ENCODE measurements at regions of chr7 and their contacts with region 1.

Region 1: GRCh38 chr7:111763221-111763801 is 201.0 kb upstream of the IMMP2L start:
- DNase-seq: peak; percentile 75
- H3K4me3 ChIP-seq: no peak overlapping the region
- H3K27ac ChIP-seq: peak overlapping the region in 1 of 2 experiments; percentile 36; a peak in 1 of 4 replicates
- H3K4me1 ChIP-seq: peaks cover 0 to 3% of the 10 kb centered on the region in 2 experiments; a peak in 1 of 4 replicates
- H3K27me3 ChIP-seq: no peaks in the 10 kb centered on the region
- CTCF ChIP-seq: peak; percentile 99
- EP300 ChIP-seq: no peak
- RAD21 ChIP-seq: peak; percentile 82

Region 2: GRCh38 chr7:111682588-111683340 is 80.5 kb before region 1 on chr7:
- CTCF ChIA-PET with region 1: no interaction called
- POLR2A ChIA-PET with region 1: no interaction called
- DNase-seq: peak; percentile 13
- H3K4me3 ChIP-seq: 0 out of 4 replicates have a peak overlapping the region, but pooled peaks of 1 of the 2 experiments have one; percentile 7
- H3K27ac ChIP-seq: peak overlapping the region in 1 of 2 experiments; percentile 46; a peak in 2 of 4 replicates
- H3K4me1 ChIP-seq: peaks cover 8 to 19% of the 10 kb centered on the region in 2 experiments
- H3K27me3 ChIP-seq: no peaks in the 10 kb centered on the region
- CTCF ChIP-seq: no peak
- EP300 ChIP-seq: peak in 1 of 2 experiments; percentile 79; a peak in 2 of 4 replicates
- RAD21 ChIP-seq: no peak

Region 3: GRCh38 chr7:111741811-111742240 is 21.5 kb before region 1 on chr7:
- CTCF ChIA-PET with region 1: interaction called, 86 read pairs
- POLR2A ChIA-PET with region 1: no interaction called
- DNase-seq: peak; percentile 79
- H3K4me3 ChIP-seq: no peak overlapping the region; a peak in 1 of 4 replicates
- H3K27ac ChIP-seq: no peak overlapping the region
- H3K4me1 ChIP-seq: peaks cover 0 to 4% of the 10 kb centered on the region in 2 experiments; a peak in 2 of 4 replicates
- H3K27me3 ChIP-seq: no peaks in the 10 kb centered on the region
- CTCF ChIP-seq: peak; percentile 92
- EP300 ChIP-seq: no peak
- RAD21 ChIP-seq: peak; percentile 96

Region 4: GRCh38 chr7:111788286-111789047 is 25.2 kb after region 1 on chr7:
- CTCF ChIA-PET with region 1: interaction called, 20 read pairs
- POLR2A ChIA-PET with region 1: no interaction called
- DNase-seq: no peak
- H3K4me3 ChIP-seq: no peak overlapping the region
- H3K27ac ChIP-seq: peak overlapping the region in 1 of 2 experiments; percentile 45; a peak in 1 of 4 replicates
- H3K4me1 ChIP-seq: peaks cover 7 to 16% of the 10 kb centered on the region in 2 experiments; a peak in 2 of 4 replicates
- H3K27me3 ChIP-seq: no peaks in the 10 kb centered on the region
- CTCF ChIP-seq: no peak
- EP300 ChIP-seq: no peak
- RAD21 ChIP-seq: no peak

Region 5: GRCh38 chr7:111842491-111842890 is 79.2 kb after region 1 on chr7:
- CTCF ChIA-PET with region 1: interaction called, 29 read pairs
- POLR2A ChIA-PET with region 1: no interaction called
- DNase-seq: no peak
- H3K4me3 ChIP-seq: no peak overlapping the region
- H3K27ac ChIP-seq: no peak overlapping the region
- H3K4me1 ChIP-seq: peaks cover 0 to 13% of the 10 kb centered on the region in 2 experiments; a peak in 2 of 4 replicates
- H3K27me3 ChIP-seq: no peaks in the 10 kb centered on the region
- CTCF ChIP-seq: no peak
- EP300 ChIP-seq: no peak
- RAD21 ChIP-seq: no peak

Region 6: GRCh38 chr7:111872450-111873325 is 109.4 kb after region 1 on chr7:
- CTCF ChIA-PET with region 1: interaction called, 11 read pairs
- POLR2A ChIA-PET with region 1: no interaction called
- DNase-seq: no peak
- H3K4me3 ChIP-seq: no peak overlapping the region
- H3K27ac ChIP-seq: no peak overlapping the region
- H3K4me1 ChIP-seq: peaks cover 0 to 24% of the 10 kb centered on the region in 2 experiments; a peak in 2 of 4 replicates
- H3K27me3 ChIP-seq: no peaks in the 10 kb centered on the region
- CTCF ChIP-seq: no peak
- EP300 ChIP-seq: no peak
- RAD21 ChIP-seq: no peak

Region 7: GRCh38 chr7:111903797-111904196 is 140.5 kb after region 1 on chr7:
- CTCF ChIA-PET with region 1: no interaction called
- POLR2A ChIA-PET with region 1: no interaction called
- DNase-seq: no peak
- H3K4me3 ChIP-seq: no peak overlapping the region
- H3K27ac ChIP-seq: no peak overlapping the region
- H3K4me1 ChIP-seq: no peaks in the 10 kb centered on the region
- H3K27me3 ChIP-seq: no peaks in the 10 kb centered on the region
- CTCF ChIP-seq: no peak
- EP300 ChIP-seq: no peak
- RAD21 ChIP-seq: no peak

Region 8: DNA sequence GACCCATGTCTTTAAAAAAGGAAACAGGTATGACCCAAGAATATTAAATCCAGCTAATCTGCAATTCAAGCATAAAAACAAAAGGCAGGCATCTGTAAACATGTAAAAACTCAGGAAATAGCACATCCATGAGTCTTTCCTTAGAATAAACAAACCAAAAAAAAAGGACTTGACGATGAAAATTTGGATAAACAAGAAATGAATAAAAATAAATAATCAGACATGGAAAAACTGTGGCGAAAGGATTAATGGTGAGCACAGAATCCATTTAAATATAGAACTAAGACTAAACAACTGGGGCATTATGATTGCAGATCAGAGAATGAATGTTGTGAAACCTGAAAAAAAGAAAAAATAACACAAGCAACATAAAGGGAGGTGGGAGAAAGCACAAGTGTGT is 272.8 kb after region 1 on chr7:
- CTCF ChIA-PET with region 1: no interaction called
- POLR2A ChIA-PET with region 1: no interaction called
- DNase-seq: no peak
- H3K4me3 ChIP-seq: no peak overlapping the region
- H3K27ac ChIP-seq: no peak overlapping the region
- H3K4me1 ChIP-seq: peaks cover 0 to 5% of the 10 kb centered on the region in 2 experiments; a peak in 1 of 4 replicates
- H3K27me3 ChIP-seq: no peaks in the 10 kb centered on the region
- CTCF ChIP-seq: no peak
- EP300 ChIP-seq: no peak
- RAD21 ChIP-seq: no peak

Region 9: GRCh38 chr7:112206238-112207044 is 443.1 kb after region 1 on chr7 and contains the starts of genes DOCK4 and ZNF277:
- CTCF ChIA-PET with region 1: interaction called, 25 read pairs
- POLR2A ChIA-PET with region 1: no interaction called
- DNase-seq: peak; percentile 98
- H3K4me3 ChIP-seq: peak within 1 kb of the TSS; percentile 82 to 99
- H3K27ac ChIP-seq: peak within 1 kb of the TSS; percentile 71 to 92
- H3K4me1 ChIP-seq: peaks cover 0 to 18% of the 10 kb centered on the region in 2 experiments; a peak in 2 of 4 replicates
- H3K27me3 ChIP-seq: no peaks in the 10 kb centered on the region
- CTCF ChIP-seq: no peak
- EP300 ChIP-seq: no peak; a peak in 1 of 4 replicates
- RAD21 ChIP-seq: peak; percentile 41
- polyA plus RNA-seq, gene DOCK4: 8.5 and 8.9 TPM in 2 replicates
- polyA plus RNA-seq, gene ZNF277: 11.5 and 12.9 TPM in 2 replicates

Region 10: DNA sequence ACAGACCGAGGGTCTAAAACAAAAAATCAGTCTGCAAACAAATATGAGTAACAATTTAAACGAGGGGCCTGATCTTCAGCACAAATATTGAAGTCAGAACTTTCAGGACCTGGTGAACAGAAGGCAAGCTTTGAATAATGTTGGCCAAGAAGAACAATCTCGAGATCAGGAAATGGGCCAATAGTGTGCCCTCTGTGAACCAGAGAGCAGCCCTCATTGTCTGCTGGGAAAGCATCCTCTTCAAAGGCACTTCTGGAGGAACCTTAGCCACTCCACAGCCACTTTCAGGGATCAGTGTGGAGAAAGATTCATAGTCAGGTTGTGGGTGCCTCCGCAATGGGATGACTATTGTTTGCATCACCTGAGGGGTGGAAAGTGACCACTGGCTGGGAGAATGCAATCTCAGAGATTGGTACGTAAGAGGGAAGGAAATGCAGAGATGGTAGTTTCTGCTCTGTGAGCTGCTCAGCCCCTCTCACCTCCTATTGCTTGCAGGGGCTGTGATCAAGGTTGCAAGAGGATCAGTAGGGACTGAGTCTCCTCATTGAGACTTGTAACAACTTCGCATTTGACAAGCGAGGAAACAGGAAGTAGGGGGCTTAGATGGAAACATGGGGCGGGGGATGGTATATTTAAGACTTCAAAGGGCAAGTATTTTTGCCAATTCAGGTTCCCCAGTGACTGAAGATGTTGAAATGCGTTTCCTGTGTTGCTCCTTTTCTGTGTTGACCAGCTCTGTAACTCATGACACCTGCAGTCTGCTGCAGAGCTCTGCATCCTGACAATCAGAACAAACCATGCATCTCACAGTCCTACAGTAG is 658.6 kb after region 1 on chr7:
- CTCF ChIA-PET with region 1: interaction called, 24 read pairs
- POLR2A ChIA-PET with region 1: no interaction called
- DNase-seq: no peak
- H3K4me3 ChIP-seq: no peak overlapping the region
- H3K27ac ChIP-seq: peak overlapping the region in 1 of 2 experiments; percentile 78; a peak in 1 of 4 replicates
- H3K4me1 ChIP-seq: peaks cover 13 to 23% of the 10 kb centered on the region in 2 experiments; a peak in 3 of 4 replicates
- H3K27me3 ChIP-seq: no peaks in the 10 kb centered on the region
- CTCF ChIP-seq: no peak
- EP300 ChIP-seq: no peak
- RAD21 ChIP-seq: no peak